ENCODE measurements at regions of chr7 and their contacts with region 1.

Region 1: DNA sequence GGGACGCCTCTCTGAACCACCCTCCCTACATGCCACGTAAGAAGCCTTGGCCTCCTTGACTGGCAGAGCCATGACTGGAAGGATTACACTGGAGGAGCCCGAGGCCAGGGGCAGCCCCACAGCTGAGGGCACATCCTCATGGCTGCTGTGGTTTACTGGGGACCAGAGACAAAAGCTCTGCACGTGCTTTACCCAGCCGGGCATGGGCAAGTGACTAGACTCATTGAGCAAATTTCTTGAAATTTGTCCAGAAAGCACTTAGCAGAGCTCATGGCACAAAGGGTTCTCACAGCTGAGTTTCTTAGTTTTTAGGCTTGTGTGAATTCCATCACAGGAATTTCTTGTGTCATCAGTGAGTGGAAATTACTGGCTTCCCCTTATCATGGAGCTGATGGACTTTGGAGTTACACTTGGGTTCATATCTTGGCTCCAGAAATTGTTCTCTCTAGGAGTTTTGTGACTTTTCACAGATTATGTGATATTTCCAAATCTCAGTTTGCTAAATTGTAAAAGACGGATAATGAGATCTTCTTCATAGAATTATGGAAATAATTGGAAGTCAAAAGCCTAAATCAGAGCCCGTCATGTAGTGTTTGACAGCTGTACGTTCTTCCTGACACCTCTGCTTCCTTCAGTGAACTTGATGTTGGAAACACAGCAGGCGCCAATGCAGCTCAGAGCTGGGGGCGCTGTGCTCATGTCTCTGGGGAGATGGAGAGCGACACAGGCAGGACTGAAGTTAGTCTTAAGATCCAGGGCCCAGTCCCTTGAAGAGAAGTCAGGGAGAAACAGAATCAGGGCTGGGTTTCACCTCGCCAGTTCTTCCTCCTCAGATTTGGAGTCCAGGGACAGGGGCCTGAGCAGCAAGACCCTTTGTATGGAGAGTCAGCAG is 47.7 kb upstream of the MGAM2 start:
- DNase-seq: peak; percentile 54 to 66
- H3K4me3 ChIP-seq: no peak overlapping the region
- H3K4me3 Mint-ChIP-seq: peak overlapping the region; percentile 30
- H3K27ac Mint-ChIP-seq: peak overlapping the region; percentile 75
- H3K4me1 ChIP-seq: peaks cover 27% of the 10 kb centered on the region
- H3K4me1 Mint-ChIP-seq: peaks cover 19% of the 10 kb centered on the region
- H3K27me3 ChIP-seq: no peaks in the 10 kb centered on the region
- H3K27me3 Mint-ChIP-seq: no peaks in the 10 kb centered on the region
- CTCF ChIP-seq: peak in 1 of 2 experiments; percentile 8

Region 2: DNA sequence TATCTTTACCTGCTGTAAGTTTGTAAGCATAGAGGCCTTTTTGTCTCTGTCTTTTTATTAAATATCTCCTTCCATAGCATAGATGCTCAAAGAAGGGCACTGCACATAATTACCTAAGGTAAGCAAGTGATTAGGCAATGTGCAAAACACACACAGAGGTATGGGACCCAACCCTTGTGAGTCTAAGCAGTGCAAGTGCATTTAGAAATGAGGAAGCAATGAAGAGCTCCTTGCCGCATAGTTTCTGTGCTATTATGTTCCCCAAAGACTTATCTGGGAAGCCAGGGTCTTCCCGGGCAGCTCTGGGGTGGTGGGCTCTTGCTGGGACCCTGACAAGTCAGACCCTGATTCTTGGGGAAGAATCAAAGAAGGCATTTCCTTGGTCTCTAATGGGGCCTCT is 34.2 kb after region 1 on chr7:
- CTCF ChIA-PET with region 1: no interaction called
- POLR2A ChIA-PET with region 1: no interaction called
- intact Hi-C with region 1: loop called (anchors 1 kb)
- DNase-seq: no peak
- H3K4me3 ChIP-seq: no peak overlapping the region
- H3K4me3 Mint-ChIP-seq: no peak overlapping the region
- H3K27ac Mint-ChIP-seq: no peak overlapping the region
- H3K4me1 ChIP-seq: peaks cover 15% of the 10 kb centered on the region
- H3K4me1 Mint-ChIP-seq: peaks cover 20% of the 10 kb centered on the region
- H3K27me3 ChIP-seq: no peaks in the 10 kb centered on the region
- H3K27me3 Mint-ChIP-seq: no peaks in the 10 kb centered on the region
- CTCF ChIP-seq: no peak

Region 3: GRCh38 chr7:142104550-142105527 is 41.0 kb after region 1 on chr7:
- CTCF ChIA-PET with region 1: interaction called, 4 read pairs
- POLR2A ChIA-PET with region 1: no interaction called
- intact Hi-C with region 1: loop called (anchors 2 kb)
- DNase-seq: peak; percentile 73 to 86
- H3K4me3 ChIP-seq: no peak overlapping the region
- H3K4me3 Mint-ChIP-seq: peak overlapping the region; percentile 57
- H3K27ac Mint-ChIP-seq: peak overlapping the region; percentile 92
- H3K4me1 ChIP-seq: peaks cover 45% of the 10 kb centered on the region
- H3K4me1 Mint-ChIP-seq: peaks cover 39% of the 10 kb centered on the region
- H3K27me3 ChIP-seq: no peaks in the 10 kb centered on the region
- H3K27me3 Mint-ChIP-seq: no peaks in the 10 kb centered on the region
- CTCF ChIP-seq: no peak

Region 4: GRCh38 chr7:142796608-142797385 is 733.0 kb after region 1 on chr7:
- CTCF ChIA-PET with region 1: no interaction called
- POLR2A ChIA-PET with region 1: no interaction called
- intact Hi-C with region 1: no loop called
- DNase-seq: no peak
- H3K4me3 ChIP-seq: no peak overlapping the region
- H3K4me3 Mint-ChIP-seq: no peak overlapping the region
- H3K27ac Mint-ChIP-seq: no peak overlapping the region
- H3K4me1 ChIP-seq: no peaks in the 10 kb centered on the region
- H3K4me1 Mint-ChIP-seq: no peaks in the 10 kb centered on the region
- H3K27me3 ChIP-seq: no peaks in the 10 kb centered on the region; the same call in 1 of the 2 replicates
- H3K27me3 Mint-ChIP-seq: peaks cover 10% of the 10 kb centered on the region
- CTCF ChIP-seq: no peak